Heart right ventricle (tissue), 16 donors: ENCODE measurements at regions of chr12 and their contacts with region 1.

Region 1: DNA sequence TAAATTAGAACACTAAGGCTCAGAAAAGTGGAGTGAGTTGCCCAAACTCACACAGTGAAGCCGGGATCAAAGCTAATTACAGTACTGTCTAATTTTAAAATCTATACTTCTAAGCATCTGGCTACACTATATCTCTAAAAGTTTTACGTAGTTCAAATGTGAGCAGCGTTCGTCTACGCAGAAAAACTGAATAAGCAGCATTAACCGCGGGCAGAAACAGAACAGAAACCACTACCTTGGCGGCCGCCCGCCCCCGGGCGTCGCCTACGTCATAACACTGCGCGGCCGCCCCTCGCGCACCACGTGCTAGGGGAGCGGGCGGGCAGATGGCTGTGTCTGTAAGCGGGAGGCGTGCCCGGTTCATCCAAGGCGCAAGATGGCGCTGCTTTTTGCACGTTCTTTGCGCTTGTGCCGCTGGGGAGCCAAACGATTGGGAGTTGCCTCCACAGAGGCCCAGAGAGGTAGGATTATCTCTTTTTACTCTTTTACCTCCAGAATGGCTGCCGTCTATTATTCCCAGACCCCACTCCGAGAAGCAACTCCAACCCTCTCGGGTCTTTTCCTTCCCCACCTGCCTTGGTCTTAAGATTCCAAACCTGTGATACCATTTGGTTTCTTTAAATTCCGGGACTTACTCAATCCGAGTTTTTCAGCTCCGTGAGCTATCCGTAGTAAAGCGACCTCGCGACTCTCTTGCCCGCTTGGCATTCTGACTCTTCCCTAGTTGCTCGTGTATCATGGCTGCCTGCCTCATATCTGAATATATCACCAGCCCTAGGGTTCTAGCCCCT is at the start of gene SPRYD4:
- DNase-seq: peak; percentile 92 to 93
- ATAC-seq: peak; percentile 96 to 99 (median 98)
- H3K4me3 ChIP-seq: peak within 1 kb of the TSS; percentile 53 to 95 (median 79)
- H3K27ac ChIP-seq: peak within 1 kb of the TSS; percentile 49 to 94 (median 88)
- H3K4me1 ChIP-seq: peaks cover 3 to 35% (median 20%) of the 10 kb centered on the region in 9 donors
- H3K27me3 ChIP-seq: no peaks in the 10 kb centered on the region
- CTCF ChIP-seq: peak in 8 of 9 donors; percentile 13 to 67 (median 44)
- total RNA-seq, gene SPRYD4: 3.0 to 5.0 (median 4.4) TPM

Region 2: DNA sequence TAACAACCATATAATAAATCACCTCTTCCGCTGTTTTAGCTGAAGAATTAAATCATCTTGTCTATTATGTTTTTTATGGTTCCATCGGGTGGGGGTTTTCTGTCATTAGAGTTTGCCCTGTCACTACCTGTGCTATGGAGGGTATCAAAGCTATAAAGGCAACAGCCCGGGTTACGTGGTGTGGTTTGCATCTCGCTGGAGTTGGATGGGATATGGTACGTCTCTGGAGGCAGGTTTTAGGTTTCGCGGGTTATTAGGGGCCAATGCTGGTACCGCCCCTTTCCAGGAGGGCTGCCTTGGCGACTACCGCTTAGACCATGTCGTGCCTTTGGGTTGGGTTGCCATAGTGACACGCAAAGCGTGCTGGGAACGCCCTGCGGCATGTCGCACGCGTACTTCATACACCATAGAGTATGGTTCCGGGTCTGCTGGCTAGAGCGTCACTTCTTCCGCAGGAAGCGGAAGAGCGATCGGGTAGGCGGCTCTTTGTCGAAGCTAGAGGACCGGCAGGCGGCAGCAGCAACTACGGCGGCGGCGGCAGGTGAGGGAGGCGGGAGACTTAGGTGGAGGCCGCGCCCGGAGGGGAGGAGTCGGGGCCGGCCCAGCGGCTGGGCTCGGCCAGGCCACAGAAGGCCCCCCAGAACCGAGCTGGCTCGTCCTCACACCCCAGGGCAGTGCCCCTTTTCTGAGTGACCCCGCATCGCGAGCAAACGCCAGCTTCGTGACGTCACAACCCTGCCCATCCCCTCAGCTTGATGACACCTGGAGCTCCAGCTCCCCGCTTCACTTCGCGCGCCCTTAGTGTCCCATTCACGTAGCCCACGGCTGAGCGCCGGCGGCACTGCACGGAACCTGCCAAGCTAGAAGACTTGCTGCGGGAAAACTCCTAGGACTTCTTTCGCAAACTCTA is 350.4 kb before region 1 on chr12 and contains the start of gene ZC3H10:
- intact Hi-C with region 1: loop called in 7 of 10 experiments (anchors 1 to 10 kb)
- DNase-seq: peak; percentile 93 to 97
- ATAC-seq: peak; percentile 81 to 91 (median 88)
- H3K4me3 ChIP-seq: peak within 1 kb of the TSS; percentile 53 to 84 (median 74)
- H3K27ac ChIP-seq: peak within 1 kb of the TSS; percentile 82 to 95 (median 91)
- H3K4me1 ChIP-seq: peaks cover 0 to 56% (median 38%) of the 10 kb centered on the region in 9 donors
- H3K27me3 ChIP-seq: no peaks in the 10 kb centered on the region
- CTCF ChIP-seq: peak in 8 of 9 donors; percentile 43 to 78 (median 52)
- total RNA-seq, gene ZC3H10: 3.6 to 5.8 (median 4.9) TPM

Region 3: DNA sequence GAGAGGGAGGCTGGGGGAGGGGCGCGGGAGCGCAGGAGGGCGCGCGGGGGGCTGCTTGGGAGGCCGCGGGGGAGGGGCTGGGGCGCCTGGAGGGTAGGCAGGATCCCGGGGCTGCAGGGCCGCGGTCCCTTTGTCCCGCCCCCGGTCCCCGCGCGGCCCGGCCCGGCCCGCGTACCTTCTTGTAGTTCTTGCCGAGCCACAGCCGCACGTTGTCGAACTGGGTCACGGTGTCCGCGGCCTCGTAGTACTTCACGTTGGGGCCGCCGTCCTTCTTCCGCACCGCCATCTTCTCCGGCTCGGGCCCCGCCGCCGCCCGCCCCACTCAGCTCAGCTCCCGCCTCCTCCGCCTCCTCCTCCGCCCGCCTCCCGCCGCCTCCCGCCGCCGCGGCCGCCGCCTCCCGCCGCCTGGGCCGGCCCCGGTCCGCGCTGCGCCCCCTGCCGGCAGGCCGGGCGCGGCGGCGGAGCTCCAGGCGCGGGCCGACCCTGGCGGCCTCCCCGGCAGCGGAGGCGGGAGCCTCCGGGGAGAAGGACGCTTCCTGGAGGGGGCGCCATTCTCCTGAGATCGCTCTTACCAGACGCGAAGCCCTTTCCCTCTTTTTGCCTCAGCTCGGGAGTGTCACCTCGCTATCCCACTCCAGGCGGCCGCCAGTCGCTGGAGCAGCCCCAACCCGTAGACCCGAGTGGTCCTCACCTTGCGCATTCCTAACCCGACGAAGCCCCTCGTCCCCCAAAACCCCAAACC is 279.1 kb before region 1 on chr12 and contains the start of gene SMARCC2:
- intact Hi-C with region 1: loop called in 5 of 10 experiments (anchors 2 to 10 kb)
- DNase-seq: peak; percentile 87 to 88
- ATAC-seq: peak; percentile 84 to 94 (median 92)
- H3K4me3 ChIP-seq: peak within 1 kb of the TSS; percentile 61 to 92 (median 86)
- H3K27ac ChIP-seq: peak within 1 kb of the TSS; percentile 78 to 95 (median 92)
- H3K4me1 ChIP-seq: peaks cover 6 to 39% (median 27%) of the 10 kb centered on the region in 9 donors
- H3K27me3 ChIP-seq: no peaks in the 10 kb centered on the region
- CTCF ChIP-seq: peak; percentile 63 to 81 (median 74)
- total RNA-seq, gene SMARCC2: 56.2 to 81.9 (median 62.8) TPM

Region 4: GRCh38 chr12:56266693-56267442 is 201.5 kb before region 1 on chr12 and contains the start of gene COQ10A:
- intact Hi-C with region 1: loop called in 1 of 10 experiments (anchors 10 kb)
- DNase-seq: peak; percentile 88 to 92
- ATAC-seq: peak; percentile 90 to 97 (median 93)
- H3K4me3 ChIP-seq: peak within 1 kb of the TSS; percentile 57 to 90 (median 78)
- H3K27ac ChIP-seq: peak within 1 kb of the TSS; percentile 90 to 99 (median 96)
- H3K4me1 ChIP-seq: peaks cover 12 to 52% (median 23%) of the 10 kb centered on the region in 9 donors
- H3K27me3 ChIP-seq: no peaks in the 10 kb centered on the region
- CTCF ChIP-seq: peak; percentile 48 to 83 (median 68)
- total RNA-seq, gene COQ10A: 55.5 to 258 (median 147) TPM

Region 5: DNA sequence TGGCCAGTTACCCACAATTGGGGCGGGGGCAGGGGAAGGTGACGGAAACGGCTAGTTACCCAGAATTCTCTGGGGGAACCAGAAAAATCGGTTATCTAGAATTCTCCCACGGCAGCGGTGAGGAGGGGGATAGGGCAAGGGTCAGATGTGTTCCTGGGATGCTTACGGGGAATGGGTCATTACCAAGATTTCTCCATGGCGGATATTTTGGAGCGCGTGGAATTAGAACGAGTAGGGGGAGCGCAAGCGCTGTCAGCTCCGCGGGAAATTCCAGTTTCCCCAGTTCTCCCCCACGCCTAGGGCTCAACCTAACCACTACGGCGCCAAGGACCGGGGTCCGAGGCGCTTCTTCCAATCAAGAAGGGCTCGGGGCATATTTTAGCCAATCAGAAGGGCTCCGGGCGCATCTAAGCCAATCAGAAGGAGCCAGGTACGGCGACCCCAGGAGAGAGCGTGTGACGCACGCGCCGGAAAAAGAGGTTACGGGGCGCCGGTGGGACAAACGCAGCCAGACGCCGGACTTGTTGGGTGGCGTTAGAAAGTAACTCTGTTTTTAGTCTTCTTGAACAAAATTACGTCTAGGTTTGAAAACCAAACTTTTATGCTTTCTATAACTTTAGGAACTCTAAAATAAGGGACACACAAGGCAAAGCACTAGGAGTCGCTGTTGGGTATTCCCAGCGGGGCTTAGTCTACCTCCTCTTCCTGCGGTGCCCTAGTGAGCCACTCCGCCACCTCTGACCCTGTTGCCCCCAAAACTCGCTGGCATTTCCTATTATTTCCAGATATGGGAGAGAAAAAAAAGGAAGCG is 134.5 kb before region 1 on chr12 and contains the start of gene PAN2:
- intact Hi-C with region 1: loop called in 4 of 10 experiments (anchors 10 kb)
- DNase-seq: peak; percentile 93 to 97
- ATAC-seq: peak; percentile 98 to 99 (median 99)
- H3K4me3 ChIP-seq: peak within 1 kb of the TSS; percentile 52 to 73 (median 61)
- H3K27ac ChIP-seq: peak within 1 kb of the TSS; percentile 84 to 97 (median 94)
- H3K4me1 ChIP-seq: peaks cover 6 to 35% (median 15%) of the 10 kb centered on the region in 9 donors
- H3K27me3 ChIP-seq: no peaks in the 10 kb centered on the region
- CTCF ChIP-seq: peak in 8 of 9 donors; percentile 29 to 74 (median 52)
- total RNA-seq, gene PAN2: 23.6 to 64.4 (median 38.1) TPM

Region 6: GRCh38 chr12:56359851-56360767 is 108.3 kb before region 1 on chr12 and contains the start of gene STAT2:
- intact Hi-C with region 1: loop called in 7 of 10 experiments (anchors 2 to 10 kb)
- DNase-seq: peak; percentile 99
- ATAC-seq: peak; percentile 98 to 99 (median 99)
- H3K4me3 ChIP-seq: peak within 1 kb of the TSS; percentile 61 to 98 (median 84)
- H3K27ac ChIP-seq: peak within 1 kb of the TSS; percentile 65 to 95 (median 91)
- H3K4me1 ChIP-seq: peaks cover 0 to 39% (median 25%) of the 10 kb centered on the region in 9 donors
- H3K27me3 ChIP-seq: no peaks in the 10 kb centered on the region
- CTCF ChIP-seq: peak in 2 of 9 donors; percentile 11 to 21
- total RNA-seq, gene STAT2: 30.8 to 107 (median 38.7) TPM

Region 7: DNA sequence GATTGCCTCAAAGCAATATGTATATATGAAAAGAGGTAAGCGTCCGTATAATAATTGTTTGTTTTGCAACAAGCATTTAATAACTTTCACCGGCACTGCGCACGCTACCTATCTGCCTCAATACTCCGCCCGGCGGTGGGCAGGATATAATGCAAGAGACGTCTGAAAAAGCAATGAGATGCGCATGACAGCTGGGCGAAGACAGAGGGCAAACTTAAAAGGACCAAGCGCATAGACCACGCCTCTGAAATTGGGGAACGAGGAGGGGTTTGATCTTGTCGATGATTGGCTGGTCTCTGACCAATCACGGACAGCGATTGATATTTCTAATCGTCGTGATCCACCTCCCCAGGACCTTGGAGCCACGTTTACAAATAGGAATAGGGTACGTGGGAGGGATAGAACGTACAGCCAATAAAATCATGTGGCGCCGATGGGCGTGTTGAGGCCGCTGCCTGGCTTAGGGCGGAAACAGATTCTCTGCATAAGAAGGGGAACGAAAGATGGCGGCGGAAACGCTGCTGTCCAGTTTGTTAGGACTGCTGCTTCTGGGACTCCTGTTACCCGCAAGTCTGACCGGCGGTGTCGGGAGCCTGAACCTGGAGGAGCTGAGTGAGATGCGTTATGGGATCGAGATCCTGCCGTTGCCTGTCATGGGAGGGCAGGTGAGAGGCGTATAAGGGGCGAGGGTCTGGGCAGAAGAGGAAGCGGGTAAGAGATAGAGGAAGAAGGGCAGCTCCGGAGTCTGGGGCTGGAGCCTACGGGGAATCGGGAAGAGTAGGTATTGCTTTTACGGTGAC is 1225.4 kb after region 1 on chr12 and contains the start of gene OS9:
- intact Hi-C with region 1: no loop called
- DNase-seq: peak; percentile 86 to 99
- ATAC-seq: peak; percentile 98 to 99 (median 99)
- H3K4me3 ChIP-seq: peak within 1 kb of the TSS; percentile 62 to 92 (median 82)
- H3K27ac ChIP-seq: peak within 1 kb of the TSS in 9 of 10 donors; percentile 59 to 92 (median 79)
- H3K4me1 ChIP-seq: peaks cover 0 to 21% (median 12%) of the 10 kb centered on the region in 9 donors
- H3K27me3 ChIP-seq: peaks cover 0 to 16% (median 0%) of the 10 kb centered on the region in 7 donors
- CTCF ChIP-seq: peak; percentile 62 to 86 (median 78)
- total RNA-seq, gene OS9: 84.9 to 181 (median 113) TPM